HEK293T (cell line): ENCODE measurements at regions of chr18 and their contacts with region 1.

Region 1: DNA sequence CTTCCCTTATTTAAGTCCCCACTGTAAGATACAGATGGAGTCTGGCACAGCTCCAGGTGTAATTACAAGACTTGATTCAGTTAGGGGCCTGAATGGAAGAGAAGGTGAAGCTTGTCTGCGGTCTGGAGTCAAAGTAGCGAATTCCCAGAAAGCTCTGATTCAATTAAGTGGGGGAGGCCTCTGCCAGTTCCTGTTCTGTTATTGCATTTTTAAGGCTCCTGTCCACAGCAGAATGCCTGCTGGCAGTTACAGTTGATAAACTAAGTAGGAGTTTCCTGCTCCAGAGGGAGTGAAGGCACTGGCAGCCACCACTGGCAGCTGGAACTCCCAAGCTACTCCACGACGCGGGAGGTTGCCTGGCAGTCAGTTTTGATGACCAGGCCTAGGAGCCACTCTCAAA is 181.1 kb downstream of the SOCS6 start:
- DNase-seq: no peak

Region 2: GRCh38 chr18:70373042-70373519 is 96.8 kb before region 1 on chr18:
- CTCF ChIA-PET with region 1: no interaction called
- POLR2A ChIA-PET with region 1: no interaction called
- DNase-seq: no peak

Region 3: GRCh38 chr18:70491734-70492348 is 21.9 kb after region 1 on chr18:
- CTCF ChIA-PET with region 1: interaction called, 11 read pairs
- POLR2A ChIA-PET with region 1: no interaction called
- DNase-seq: peak; percentile 28